Sigmoid colon (tissue), 7 donors: ENCODE measurements at regions of chr13 and their contacts with region 1.

Region 1: DNA sequence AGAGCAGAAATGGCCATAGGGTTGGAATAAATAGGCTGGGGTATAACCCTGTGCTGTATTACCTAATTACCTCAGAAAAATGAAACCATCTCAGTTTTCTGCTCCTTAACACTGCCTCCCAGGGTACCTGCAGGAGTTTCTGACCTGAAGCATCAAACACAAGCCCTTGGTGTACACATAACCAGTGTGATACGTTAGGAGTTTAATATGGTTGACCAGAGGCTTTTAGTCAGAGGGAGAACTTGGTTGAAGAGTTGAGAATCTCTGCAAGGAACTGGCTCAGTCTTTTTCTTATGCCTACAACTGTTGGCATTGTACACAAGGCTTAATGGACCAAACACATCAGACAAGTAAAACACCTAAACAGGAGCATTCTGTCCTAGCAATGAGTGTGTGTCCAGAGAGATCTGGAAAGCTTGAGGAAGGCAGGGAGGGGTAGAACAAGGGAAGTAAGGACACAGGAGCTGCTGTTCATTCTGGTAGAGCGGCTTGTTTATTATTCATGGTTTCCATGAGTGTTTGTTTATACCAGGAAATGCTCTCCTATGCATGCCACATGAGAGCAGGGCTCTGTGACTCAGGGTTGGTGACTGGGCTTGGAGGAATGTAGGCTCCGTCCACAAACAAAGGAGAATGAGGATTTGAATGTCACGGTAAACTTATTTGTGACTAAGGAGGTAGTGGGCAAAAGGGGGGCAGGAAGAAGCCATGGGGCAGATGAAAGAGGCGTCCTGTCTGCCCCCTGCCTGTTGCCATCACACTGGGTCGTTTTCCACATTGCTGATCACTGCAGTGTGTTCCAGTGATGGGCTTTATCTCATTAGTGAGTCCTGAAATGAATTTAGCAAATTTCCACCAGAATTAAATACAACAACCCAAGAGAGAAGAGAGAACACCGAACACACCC is 11.9 kb upstream of the SPATA13 start:
- DNase-seq: no peak
- H3K4me3 ChIP-seq: no peak overlapping the region
- H3K27ac ChIP-seq: peak overlapping the region in 3 of 4 donors; percentile 29 to 54 (median 46)
- H3K4me1 ChIP-seq: peaks cover 0 to 10% (median 8%) of the 10 kb centered on the region in 4 donors
- H3K27me3 ChIP-seq: no peaks in the 10 kb centered on the region
- CTCF ChIP-seq: no peak
- EP300 ChIP-seq: peak in 2 of 4 donors; percentile 34 to 54
- POLR2A ChIP-seq: no peak

Region 2: GRCh38 chr13:24063281-24063877 is 85.3 kb before region 1 on chr13:
- intact Hi-C with region 1: loop called (anchors 5 kb)
- DNase-seq: no peak
- H3K4me3 ChIP-seq: no peak overlapping the region
- H3K27ac ChIP-seq: no peak overlapping the region
- H3K4me1 ChIP-seq: no peaks in the 10 kb centered on the region
- H3K27me3 ChIP-seq: no peaks in the 10 kb centered on the region
- CTCF ChIP-seq: no peak
- EP300 ChIP-seq: no peak
- POLR2A ChIP-seq: no peak

Region 3: DNA sequence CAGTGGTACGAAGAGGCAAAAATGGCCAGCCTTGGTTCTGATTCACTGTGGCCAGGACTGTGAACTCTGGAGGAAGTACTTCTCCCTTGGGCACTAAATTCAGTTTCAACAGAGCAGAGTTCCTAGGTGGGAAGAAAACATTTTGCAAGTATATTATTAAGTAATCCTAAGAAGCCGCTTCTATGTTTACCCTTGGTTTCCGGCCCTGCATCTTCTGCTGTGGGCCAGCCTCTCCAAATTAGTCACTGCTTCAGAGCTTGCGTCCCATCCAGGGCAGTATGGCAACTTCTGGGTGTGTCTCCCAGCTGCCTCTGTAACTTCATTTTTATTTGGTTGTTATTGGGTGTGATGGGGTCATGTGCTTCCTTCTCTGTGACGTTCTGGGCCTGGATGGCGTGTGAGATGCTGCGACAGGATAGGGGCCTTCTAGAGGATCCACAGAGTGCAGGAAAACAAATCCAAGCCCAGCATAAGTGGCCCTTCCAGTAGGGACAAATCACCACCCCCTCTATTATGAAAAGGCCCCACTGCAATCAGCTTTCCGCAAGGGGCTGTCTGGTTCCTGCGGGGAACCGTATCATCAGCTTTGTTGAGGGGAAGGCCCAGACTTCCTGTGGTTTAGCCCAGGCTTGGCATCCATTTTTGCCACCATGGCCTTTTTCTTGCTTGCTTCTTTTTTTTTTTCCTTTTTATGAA is 105.6 kb after region 1 on chr13:
- intact Hi-C with region 1: no loop called
- DNase-seq: peak; percentile 62
- H3K4me3 ChIP-seq: no peak overlapping the region
- H3K27ac ChIP-seq: peak overlapping the region in 2 of 4 donors; percentile 10 to 20
- H3K4me1 ChIP-seq: no peaks in the 10 kb centered on the region
- H3K27me3 ChIP-seq: no peaks in the 10 kb centered on the region
- CTCF ChIP-seq: no peak
- EP300 ChIP-seq: no peak
- POLR2A ChIP-seq: no peak